Left colon (tissue), 2 donors: ENCODE measurements at regions of chr3 and their contacts with region 1.

Region 1: DNA sequence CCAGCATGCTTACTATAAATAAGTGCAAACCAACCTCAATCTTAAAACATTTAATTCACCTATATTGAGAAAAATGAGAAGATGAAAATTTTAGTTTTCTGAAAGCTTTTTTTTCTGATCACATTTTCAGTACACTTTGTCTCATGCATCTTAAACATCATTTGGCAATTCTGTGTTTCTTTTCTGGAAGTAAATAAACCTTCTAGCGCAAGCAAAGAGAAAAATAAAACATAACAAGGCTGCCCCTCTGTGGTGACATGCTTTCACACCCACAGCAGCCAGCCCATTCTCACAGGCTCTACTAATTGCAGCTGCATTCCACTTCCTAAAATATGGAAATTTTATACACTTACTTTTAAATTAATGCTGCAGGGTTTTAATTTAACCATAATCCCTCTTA is 90.1 kb downstream of the NEK10 start:
- DNase-seq: peak in 1 of 2 donors; percentile 16
- ATAC-seq: peak; percentile 72

Region 2: DNA sequence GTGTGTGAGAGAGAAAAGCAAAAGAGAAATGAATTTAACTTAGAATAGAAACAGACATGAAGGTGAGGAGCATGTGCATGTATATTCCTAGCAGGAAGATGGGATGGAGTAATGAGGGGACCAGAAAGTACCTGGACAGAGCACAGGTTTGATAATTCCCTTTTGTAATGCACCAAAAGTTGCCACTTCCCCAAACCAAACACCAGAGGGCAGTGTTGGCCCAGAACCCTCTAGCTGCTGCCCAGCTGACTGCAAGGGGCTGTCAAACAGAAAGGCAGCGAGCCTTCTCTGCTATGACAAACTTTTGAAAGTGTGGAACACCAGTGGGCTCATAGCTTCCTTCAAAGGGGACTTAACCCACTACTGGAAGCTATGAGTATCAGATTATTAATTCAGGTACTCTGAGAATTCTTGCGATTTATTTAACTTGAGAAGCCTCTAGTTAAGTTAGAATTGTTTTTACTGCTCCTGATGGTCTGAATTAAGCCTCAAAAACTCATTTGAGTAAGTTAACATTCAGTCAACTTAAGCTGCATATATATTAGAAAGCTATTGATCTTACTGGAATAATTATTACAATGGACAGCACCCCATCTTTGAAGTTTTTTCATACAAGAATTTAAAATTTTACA is 144.8 kb before region 1 on chr3:
- intact Hi-C with region 1: loop called in 1 of 2 experiments (anchors 10 kb)
- DNase-seq: peak; percentile 42 to 57
- ATAC-seq: peak; percentile 88

Region 3: DNA sequence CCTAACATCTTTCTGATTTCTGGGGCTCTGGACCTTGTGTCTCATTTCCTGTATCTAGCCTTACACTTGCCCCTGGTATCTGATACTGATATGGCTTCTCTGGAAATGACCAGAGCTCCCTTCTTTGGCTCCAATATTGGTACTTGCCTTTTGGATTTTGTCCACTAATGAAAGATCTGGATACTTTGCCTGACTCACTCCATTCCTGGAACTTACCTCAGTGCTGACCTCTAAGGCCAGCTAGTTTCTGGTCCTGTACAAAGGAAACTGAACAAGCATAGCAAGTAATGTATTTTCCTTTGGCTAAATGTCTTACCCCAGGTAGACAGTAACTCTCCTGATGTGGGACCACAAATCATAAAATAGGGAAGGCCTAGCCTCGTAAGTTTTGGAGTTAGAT is 298.9 kb after region 1 on chr3:
- intact Hi-C with region 1: no loop called
- DNase-seq: no peak
- ATAC-seq: no peak